ENCODE measurements at regions of chr3 and their contacts with region 1.

Region 1: DNA sequence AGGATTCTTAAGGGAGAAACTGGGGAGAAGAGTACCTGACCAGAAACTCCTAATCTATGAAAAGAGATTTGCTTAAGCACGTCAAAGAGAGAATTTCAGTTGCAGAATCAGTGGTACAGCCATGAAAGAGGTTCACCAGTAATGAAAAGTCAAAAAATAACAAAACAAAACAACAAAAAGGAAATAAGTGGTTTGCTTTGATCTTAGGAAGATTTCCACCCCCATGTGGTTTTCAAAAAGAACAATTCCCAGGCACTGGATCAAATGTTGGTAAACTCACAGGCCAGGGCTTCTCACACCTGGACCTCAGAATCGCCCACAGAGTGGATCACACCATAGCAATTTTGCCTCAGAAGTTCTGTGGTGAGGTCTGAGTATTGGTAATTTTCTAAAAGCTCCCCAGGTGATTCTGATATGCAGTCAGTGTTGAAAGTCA is 67.5 kb downstream of the TMEM39A start:
- DNase-seq: peak; percentile 42
- H3K4me3 Mint-ChIP-seq: no peak overlapping the region
- H3K27ac Mint-ChIP-seq: no peak overlapping the region
- H3K4me1 Mint-ChIP-seq: peaks cover 22% of the 10 kb centered on the region
- H3K27me3 Mint-ChIP-seq: no peaks in the 10 kb centered on the region

Region 2: DNA sequence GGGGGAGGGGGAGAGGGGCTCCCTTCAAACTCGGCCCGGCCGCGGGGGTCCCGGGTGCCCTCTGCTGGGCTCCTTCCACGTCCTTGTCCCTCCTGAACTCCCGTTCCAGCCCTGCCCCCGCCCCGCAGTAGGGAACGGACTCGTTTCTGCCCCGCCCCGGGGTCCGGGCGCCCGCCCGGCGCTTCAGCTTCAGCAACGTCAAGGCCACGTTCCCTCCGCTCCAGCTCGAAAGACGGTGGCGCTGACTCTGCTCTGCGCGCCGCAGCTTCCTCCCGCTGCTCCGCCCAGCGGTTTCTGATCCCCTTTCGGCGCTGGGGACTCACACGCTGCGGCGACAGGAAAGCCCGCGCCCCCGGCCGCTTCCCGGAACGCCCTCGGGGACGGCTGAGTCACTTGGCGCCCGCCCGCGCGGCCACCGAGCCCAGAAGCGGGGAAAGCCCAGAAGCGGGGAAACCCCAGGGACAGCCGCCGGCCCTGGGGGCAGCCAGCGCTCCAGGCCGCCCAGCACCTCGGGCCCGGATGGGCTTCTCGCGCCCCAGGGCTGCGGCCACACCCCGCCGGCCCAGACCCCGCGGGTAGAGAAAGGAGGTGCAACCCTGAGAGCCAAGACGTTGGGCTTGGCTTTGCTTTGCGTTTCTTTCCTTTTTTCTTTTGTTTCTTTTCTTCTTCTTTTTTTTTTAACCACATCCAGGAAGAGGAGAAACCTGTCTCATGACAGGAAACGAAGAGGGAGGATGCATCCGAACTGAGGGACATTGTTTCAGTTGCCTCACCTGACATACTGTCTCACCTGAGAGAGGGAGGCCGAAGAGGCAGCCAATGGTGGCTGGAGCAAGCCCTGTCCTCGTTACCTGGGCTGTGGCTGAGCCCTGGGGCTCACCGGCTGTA is 72.9 kb before region 1 on chr3:
- CTCF ChIA-PET with region 1: no interaction called
- POLR2A ChIA-PET with region 1: no interaction called
- intact Hi-C with region 1: loop called (anchors 1 kb)
- DNase-seq: peak; percentile 97
- H3K4me3 Mint-ChIP-seq: peak overlapping the region; percentile 82
- H3K27ac Mint-ChIP-seq: peak overlapping the region; percentile 95
- H3K4me1 Mint-ChIP-seq: peaks cover 41% of the 10 kb centered on the region
- H3K27me3 Mint-ChIP-seq: no peaks in the 10 kb centered on the region